Gastrocnemius medialis (tissue), 4 donors: ENCODE measurements at regions of chr11 and their contacts with region 1.

Region 1: DNA sequence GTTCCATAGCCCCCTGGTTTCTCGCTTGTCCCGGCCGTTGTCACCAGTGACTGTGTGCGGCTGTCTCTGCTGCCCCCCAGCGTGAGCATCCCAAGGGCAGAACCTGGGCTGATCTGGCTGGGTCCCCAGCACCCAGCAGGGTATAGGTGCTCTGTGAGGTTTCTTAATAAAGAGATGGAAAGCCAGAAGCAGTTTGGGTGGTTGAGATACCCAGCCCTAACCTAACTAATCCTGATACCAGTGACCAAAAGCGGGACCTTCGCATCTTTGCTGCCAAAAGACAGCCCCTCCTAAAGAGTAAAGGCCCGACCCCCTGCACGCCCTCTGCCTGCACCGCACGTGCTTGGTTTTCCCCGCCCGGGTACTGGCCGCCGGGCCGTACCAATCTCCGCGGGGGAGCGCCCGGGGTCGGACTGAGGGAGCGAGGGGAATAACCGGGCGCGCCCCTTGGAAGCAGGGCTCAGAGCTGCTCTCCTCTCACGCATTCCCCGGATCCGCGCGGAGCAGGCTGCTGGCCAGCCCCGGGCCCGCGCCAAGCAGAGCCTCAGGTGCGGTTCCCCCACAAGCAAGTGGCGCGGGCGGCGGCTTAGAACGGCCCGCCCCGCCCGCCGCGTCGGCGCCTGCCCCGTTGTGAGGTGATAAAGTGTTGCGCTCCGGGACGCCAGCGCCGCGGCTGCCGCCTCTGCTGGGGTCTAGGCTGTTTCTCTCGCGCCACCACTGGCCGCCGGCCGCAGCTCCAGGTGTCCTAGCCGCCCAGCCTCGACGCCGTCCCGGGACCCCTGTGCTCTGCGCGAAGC is at the start of gene DGAT2:
- DNase-seq: peak; percentile 34 to 54
- ATAC-seq: peak; percentile 81 to 84
- H3K4me3 ChIP-seq: peak within 1 kb of the TSS; percentile 53 to 71 (median 62)
- H3K27ac ChIP-seq: peak within 1 kb of the TSS in 2 of 4 donors; percentile 20 to 52
- H3K4me1 ChIP-seq: peaks cover 6 to 16% of the 10 kb centered on the region in 2 donors
- H3K27me3 ChIP-seq: peaks cover 0 to 8% (median 3%) of the 10 kb centered on the region in 3 donors
- CTCF ChIP-seq: peak in 2 of 5 experiments; percentile 15 to 35
- POLR2A ChIP-seq: peak in 1 of 2 donors; percentile 24
- total RNA-seq, gene DGAT2: 2.1 to 4.9 (median 4.1) TPM

Region 2: GRCh38 chr11:75706260-75706729 is 62.0 kb before region 1 on chr11:
- in situ Hi-C with region 1: no loop called
- intact Hi-C with region 1: loop called (anchors 1 kb)
- DNase-seq: peak; percentile 37 to 47
- ATAC-seq: peak; percentile 79 to 82
- H3K4me3 ChIP-seq: no peak overlapping the region
- H3K27ac ChIP-seq: no peak overlapping the region
- H3K4me1 ChIP-seq: no peaks in the 10 kb centered on the region
- H3K27me3 ChIP-seq: no peaks in the 10 kb centered on the region
- CTCF ChIP-seq: peak; percentile 62 to 93 (median 85)
- POLR2A ChIP-seq: no peak

Region 3: GRCh38 chr11:75721855-75722668 is 46.2 kb before region 1 on chr11:
- in situ Hi-C with region 1: no loop called
- intact Hi-C with region 1: loop called (anchors 1 kb)
- DNase-seq: no peak
- ATAC-seq: no peak
- H3K4me3 ChIP-seq: no peak overlapping the region
- H3K27ac ChIP-seq: no peak overlapping the region
- H3K4me1 ChIP-seq: peaks cover 0 to 4% of the 10 kb centered on the region in 2 donors
- H3K27me3 ChIP-seq: no peaks in the 10 kb centered on the region
- CTCF ChIP-seq: no peak
- POLR2A ChIP-seq: no peak